ENCODE measurements at regions of chr9 and their contacts with region 1.

Region 1: DNA sequence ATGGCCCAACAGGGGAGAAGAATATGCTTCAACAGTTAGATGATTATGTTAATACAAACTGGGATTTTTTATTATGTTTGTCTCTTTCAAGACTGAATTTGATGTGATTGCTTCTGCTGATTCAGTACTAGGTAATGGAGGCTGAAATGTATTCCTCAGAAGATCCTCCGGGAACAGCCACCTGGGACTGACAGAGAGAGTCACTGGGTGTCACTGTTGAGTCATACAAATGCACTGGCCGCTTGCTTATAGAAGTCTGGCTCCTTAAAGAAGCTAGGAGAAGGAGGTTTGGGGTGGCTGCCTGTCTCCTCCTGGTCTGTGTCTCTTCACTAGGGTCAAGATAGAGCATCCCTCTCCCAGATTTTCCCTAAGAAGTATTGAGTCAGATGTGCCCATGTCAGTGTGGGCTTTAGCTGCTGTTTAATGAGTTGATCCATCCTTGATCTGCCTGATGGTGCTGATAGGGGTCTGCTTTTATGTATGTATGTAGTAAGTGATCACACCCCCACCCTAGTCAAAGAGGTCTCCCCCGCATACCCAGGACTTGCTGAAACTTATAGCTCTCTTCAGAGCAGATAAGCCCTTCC is 773.4 kb downstream of the BRINP1 start:
- DNase-seq: peak; percentile 48
- H3K4me3 ChIP-seq: no peak overlapping the region
- H3K27ac ChIP-seq: no peak overlapping the region
- H3K4me1 ChIP-seq: no peaks in the 10 kb centered on the region
- H3K27me3 ChIP-seq: peaks cover 0 to 2% of the 10 kb centered on the region in 2 experiments
- CTCF ChIP-seq: no peak
- POLR2A ChIP-seq: no peak

Region 2: DNA sequence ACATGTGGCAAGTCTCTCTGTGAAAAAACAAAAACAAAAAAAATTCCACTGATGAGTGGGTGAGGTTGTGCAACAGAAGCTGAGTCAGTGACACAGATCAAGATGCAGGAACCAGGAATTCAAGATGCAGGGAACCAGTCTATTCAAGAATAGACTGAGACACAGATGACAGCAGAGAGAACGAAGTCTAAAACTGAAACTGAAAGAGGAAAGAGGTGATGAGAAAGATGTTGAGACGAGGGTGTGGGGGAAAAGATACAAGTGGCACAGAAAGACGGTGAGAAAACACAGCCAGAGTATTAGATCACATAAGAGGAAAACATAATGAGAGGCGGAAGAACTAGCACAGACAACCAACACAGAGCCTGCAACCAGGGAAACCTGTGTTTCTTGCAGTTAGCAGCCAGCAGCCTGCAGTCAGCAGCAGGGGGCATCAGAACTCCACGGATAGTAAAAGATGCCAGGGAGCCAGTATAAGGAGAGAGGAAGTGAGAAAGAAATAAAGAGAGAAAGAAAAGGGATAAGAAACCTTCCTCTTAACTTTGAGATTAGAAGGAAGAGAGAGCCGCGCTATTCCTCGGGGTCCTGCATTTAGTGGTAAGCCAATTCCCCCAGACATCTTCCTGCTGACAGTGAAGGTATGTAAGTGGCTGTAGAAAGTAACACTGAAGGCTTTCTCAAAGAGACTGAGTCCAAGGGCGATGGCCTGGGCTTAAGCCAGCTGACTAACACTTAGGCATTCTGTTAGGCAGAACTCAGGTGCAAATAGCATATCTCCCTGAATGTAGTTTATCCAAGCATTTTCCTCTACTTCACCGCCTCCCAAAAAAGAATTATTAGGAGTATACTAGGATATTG is 812.7 kb before region 1 on chr9:
- CTCF ChIA-PET with region 1: no interaction called
- POLR2A ChIA-PET with region 1: no interaction called
- dilution Hi-C with region 1: no loop called
- intact Hi-C with region 1: loop called (anchors 10 kb)
- DNase-seq: peak; percentile 83
- H3K4me3 ChIP-seq: peak overlapping the region; percentile 39 to 77 (median 52)
- H3K27ac ChIP-seq: no peak overlapping the region
- H3K4me1 ChIP-seq: peaks cover 7% of the 10 kb centered on the region
- H3K27me3 ChIP-seq: no peaks in the 10 kb centered on the region
- CTCF ChIP-seq: peak; percentile 80
- POLR2A ChIP-seq: no peak

Region 3: GRCh38 chr9:118558026-118558425 is 37.8 kb before region 1 on chr9:
- CTCF ChIA-PET with region 1: no interaction called
- POLR2A ChIA-PET with region 1: no interaction called
- dilution Hi-C with region 1: no loop called
- intact Hi-C with region 1: no loop called
- DNase-seq: no peak
- H3K4me3 ChIP-seq: no peak overlapping the region
- H3K27ac ChIP-seq: no peak overlapping the region
- H3K4me1 ChIP-seq: no peaks in the 10 kb centered on the region
- H3K27me3 ChIP-seq: no peaks in the 10 kb centered on the region
- CTCF ChIP-seq: no peak
- POLR2A ChIP-seq: no peak

Region 4: DNA sequence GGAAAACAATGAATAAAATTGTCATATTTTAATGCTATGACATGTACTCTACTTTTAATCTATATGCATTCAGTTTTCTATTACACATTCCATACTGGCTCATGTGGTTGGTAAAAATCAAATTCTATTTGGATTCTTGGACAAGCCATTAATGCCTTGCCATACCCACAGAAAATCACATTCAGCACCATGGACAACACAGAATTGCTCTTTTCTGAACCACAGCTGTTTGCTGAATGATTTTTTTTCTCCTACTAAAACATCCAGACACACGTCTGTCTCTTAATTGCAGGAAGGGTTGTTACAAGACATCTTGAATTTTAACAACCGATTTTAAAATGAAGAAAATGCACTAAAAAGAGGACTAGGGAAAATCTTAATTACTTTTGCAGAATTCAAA is 97.8 kb after region 1 on chr9:
- CTCF ChIA-PET with region 1: no interaction called
- POLR2A ChIA-PET with region 1: no interaction called
- dilution Hi-C with region 1: no loop called
- intact Hi-C with region 1: no loop called
- DNase-seq: no peak
- H3K4me3 ChIP-seq: no peak overlapping the region
- H3K27ac ChIP-seq: no peak overlapping the region
- H3K4me1 ChIP-seq: no peaks in the 10 kb centered on the region
- H3K27me3 ChIP-seq: no peaks in the 10 kb centered on the region
- CTCF ChIP-seq: no peak
- POLR2A ChIP-seq: no peak

Region 5: GRCh38 chr9:118829334-118829733 is 233.5 kb after region 1 on chr9:
- CTCF ChIA-PET with region 1: no interaction called
- POLR2A ChIA-PET with region 1: no interaction called
- dilution Hi-C with region 1: no loop called
- intact Hi-C with region 1: no loop called
- DNase-seq: no peak
- H3K4me3 ChIP-seq: no peak overlapping the region
- H3K27ac ChIP-seq: no peak overlapping the region
- H3K4me1 ChIP-seq: no peaks in the 10 kb centered on the region
- H3K27me3 ChIP-seq: no peaks in the 10 kb centered on the region
- CTCF ChIP-seq: no peak
- POLR2A ChIP-seq: no peak